HEK293 (cell line): ENCODE measurements at regions of chr2 and their contacts with region 1.

Region 1: DNA sequence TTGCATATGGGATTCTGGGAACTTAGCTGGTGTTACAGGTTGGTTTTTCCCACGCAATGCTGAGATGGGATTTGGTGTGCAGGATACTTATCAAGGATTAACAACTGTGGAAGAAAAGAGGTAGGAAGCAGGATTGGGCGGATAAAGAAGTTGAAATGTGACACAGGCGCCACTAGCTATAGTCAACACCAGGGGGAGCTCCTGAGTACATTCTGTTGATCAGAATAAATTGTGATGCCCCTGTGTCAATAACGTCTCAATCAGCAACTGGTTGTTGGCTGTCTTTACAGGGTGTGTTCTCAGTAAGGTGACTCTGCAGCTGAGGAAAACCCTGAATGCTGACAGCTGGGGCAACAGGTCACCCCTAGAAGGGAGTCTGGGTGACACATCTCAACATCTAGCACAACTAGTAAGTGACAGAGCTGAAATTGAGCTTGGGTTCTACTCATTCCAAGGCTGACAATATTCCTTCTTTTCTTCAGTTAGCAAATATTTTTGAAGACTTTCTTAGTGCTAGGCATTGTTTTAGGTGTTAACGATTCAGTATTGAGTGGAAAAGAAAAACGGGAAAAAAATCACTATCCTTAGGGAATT is 143.0 kb downstream of the ARL6IP6 start:
- H3K4me3 ChIP-seq: no peak overlapping the region
- H3K27ac ChIP-seq: no peak overlapping the region
- H3K4me1 ChIP-seq: no peaks in the 10 kb centered on the region
- CTCF ChIP-seq: no peak

Region 2: DNA sequence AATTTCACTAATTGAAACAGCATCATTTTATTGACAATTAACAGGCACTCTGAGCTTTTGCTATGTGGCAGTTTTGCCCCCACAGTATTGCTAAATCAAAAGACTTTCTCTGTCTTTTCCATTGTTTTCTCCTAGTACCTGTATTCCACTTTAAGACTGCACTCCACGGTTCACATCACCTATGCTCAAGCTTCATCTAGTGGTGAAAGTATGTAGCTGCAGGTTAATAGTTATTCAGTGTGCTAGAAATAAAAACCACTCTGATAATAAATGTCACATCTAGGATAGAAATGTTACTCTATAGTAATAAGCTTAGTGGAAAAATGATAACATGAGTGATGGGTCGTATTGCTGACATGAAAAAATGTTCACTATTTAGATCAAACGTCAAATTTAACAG is 118.4 kb before region 1 on chr2:
- CTCF ChIA-PET with region 1: interaction called, 10 read pairs
- POLR2A ChIA-PET with region 1: no interaction called
- H3K4me3 ChIP-seq: no peak overlapping the region
- H3K27ac ChIP-seq: no peak overlapping the region
- H3K4me1 ChIP-seq: no peaks in the 10 kb centered on the region
- CTCF ChIP-seq: no peak

Region 3: DNA sequence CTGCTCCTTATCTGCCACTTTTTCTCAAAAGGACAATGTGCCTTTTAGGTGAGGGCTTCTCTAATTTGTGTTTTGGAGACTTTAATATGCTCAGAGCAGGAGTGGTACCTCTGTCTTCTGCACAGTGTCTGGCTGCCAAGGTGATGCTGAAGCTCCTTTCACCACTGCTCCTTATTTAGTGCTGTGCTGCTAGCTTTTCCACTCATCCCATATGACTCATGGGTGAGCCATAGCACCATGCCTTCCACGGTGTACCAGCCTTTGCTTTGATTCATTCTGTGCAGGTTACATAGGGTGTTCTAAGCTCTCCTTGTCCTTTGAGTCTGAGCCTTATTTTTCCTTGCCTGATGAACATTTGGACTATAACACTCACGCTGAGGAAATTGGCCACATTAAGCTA is 59.4 kb after region 1 on chr2:
- CTCF ChIA-PET with region 1: interaction called, 11 read pairs
- POLR2A ChIA-PET with region 1: no interaction called
- H3K4me3 ChIP-seq: no peak overlapping the region
- H3K27ac ChIP-seq: no peak overlapping the region
- H3K4me1 ChIP-seq: no peaks in the 10 kb centered on the region
- CTCF ChIP-seq: no peak

Region 4: DNA sequence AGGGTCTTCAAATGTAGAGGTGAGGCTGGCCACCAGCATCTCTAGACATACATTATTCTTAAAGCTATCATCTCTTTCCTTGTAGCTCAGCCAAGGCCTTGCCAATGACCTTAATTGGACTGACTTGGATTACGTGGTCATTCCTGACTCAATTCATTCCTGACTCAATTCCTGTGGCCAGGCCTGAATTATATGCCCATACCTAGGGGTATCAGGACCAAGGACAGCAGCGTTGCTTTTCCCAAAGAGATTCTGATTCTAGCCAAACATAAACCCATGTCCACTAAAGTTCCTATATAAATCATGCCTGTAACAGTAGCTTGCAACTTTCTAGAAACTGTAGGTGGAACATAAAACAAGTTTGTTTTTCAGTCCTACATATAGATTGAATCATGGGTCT is 88.7 kb after region 1 on chr2:
- CTCF ChIA-PET with region 1: no interaction called
- POLR2A ChIA-PET with region 1: no interaction called
- H3K4me3 ChIP-seq: no peak overlapping the region
- H3K27ac ChIP-seq: no peak overlapping the region
- H3K4me1 ChIP-seq: no peaks in the 10 kb centered on the region
- CTCF ChIP-seq: no peak

Region 5: DNA sequence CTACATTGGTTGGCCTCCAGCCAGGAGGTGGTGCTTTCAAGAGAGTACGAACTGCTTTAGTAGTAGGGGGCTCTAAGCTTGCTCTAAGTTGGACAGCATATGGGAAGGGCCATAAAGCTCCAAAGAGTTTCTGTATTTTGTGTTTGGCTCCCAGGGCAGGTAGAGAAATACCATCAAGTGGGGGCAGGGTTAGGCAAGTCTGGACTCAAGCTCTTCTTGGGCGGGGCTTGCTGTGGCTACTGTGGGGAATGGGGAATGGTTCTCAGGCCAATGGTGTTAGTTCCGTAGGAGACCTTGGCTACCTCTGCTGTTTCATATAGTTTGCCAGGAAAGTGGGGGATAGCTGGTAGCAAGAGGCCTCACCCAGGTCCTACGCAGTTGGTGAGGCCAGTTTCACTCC is 229.1 kb after region 1 on chr2:
- CTCF ChIA-PET with region 1: no interaction called
- POLR2A ChIA-PET with region 1: no interaction called
- H3K4me3 ChIP-seq: no peak overlapping the region
- H3K27ac ChIP-seq: no peak overlapping the region
- H3K4me1 ChIP-seq: no peaks in the 10 kb centered on the region
- CTCF ChIP-seq: no peak

Region 6: DNA sequence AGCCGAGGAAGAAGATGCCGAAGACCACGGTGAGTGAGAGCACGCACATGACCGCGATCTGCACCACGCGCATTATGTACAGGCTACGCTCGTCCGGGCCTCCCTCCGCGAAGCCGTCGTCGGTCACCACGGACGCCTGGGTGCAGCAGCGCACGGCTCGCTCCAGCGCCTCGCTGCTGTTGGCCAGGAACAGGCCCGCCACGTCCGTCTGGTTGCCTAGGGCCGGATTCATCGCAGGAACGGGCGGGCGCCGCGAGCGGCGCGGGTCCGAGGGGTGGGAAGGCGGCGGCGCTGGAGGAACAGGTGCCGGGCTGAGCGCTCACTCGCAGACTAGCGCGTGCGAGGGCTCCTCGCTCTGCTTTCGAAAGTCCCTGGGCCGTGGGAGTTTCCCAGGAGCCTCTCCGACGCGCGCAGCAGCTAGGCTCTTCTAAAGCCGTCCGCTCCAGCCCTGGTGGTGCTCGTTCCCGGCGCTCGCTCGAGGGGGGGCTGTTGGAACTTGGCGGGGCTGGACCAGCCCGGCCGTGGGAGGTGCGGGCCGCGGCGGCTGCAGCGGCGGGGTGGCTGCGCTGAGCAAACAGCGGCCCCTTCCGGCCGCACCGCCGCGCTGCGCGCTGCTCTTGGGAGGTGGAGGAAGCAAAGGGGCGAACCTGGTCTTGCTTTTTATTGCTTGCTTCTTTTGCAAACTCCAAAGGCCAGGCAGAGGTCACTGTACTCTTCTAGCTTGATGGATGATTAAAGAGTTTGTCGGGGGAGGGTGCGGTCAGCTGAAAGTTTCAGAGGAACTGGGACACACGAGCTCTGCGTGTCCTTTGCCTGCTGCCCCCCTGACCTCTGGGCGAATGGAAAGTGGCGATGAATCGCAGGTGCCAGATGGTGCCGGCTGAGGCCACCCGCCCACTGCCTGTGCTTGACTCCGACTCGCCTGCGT is 617.2 kb after region 1 on chr2 and contains the start of gene RPRM:
- CTCF ChIA-PET with region 1: interaction called, 10 read pairs
- POLR2A ChIA-PET with region 1: no interaction called
- H3K4me3 ChIP-seq: peak within 1 kb of the TSS; percentile 95
- H3K27ac ChIP-seq: peak within 1 kb of the TSS; percentile 98
- H3K4me1 ChIP-seq: peaks cover 23% of the 10 kb centered on the region
- CTCF ChIP-seq: peak; percentile 54

Region 7: DNA sequence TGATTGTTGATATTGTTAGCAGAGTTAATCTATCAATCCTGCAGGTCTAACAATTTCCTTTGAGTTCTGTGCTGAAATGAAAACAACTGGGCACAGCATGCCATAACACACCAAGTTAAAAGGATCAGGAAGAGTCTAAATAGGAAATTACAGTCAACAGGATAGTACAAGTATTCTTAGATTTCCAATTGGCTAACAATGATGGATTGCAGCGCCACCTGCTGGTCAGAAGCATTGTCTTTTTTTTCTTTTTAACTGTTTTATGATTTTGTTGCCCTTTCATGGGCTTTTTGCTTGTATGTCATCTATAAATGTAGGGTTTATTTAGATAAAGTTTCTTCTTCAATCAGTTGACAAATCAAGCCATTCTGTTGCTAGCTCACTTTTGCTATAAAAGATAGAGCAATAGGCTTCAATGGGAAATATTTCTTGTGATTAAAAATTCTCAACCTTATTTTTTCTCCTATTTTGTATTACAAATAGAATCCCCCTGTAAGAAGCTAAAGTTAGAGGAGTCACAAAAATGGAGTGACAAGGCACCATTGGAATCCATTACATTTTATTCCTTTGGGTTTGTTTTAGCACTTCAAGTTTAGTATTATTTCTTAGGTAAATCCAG is 657.9 kb after region 1 on chr2:
- CTCF ChIA-PET with region 1: interaction called, 10 read pairs
- POLR2A ChIA-PET with region 1: no interaction called
- H3K4me3 ChIP-seq: no peak overlapping the region
- H3K27ac ChIP-seq: no peak overlapping the region
- H3K4me1 ChIP-seq: no peaks in the 10 kb centered on the region
- CTCF ChIP-seq: no peak; the same call in 1 of the 2 replicates